CD4-positive, alpha-beta T cell (primary cell): ENCODE measurements at regions of chr17 and their contacts with region 1.

Region 1: DNA sequence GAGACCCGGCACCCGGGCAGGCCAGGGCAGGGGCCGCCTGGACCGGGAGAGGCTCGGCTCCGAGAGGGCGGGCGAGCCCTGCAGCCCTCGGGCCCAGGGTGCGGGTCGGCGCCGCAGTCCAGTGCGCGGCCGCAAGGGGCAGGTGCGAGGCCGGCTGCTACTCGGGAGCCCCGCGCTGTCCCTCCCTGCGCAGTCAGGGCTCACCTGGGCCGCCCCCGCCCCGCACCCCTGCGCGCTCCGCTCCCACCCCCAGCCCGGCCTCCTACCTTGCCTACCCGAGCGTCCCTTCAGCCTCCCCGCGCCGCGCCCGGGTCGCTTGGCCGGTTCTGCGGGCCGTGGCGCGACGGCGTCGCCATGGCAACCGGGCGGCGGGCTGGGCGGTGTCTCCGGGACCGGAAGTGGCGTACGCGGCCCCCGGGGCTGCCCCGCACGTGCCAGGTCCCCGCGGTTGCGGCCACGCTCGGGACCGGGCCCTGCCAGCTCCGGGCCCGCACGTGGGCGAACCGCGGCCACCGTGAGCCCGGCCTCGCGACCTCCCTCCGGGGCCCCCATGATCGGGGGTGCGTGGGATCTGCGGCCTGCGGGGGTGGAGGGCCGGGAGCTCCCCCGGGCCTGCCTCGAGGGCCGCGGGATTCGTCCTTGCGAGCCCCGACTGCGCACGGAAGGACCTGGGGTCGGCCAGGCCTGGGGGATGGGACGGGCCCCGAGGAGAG is at the start of gene CYB561:
- DNase-seq: peak; percentile 33 to 90 (median 64)
- ATAC-seq: peak; percentile 71
- H3K4me3 ChIP-seq: peak within 1 kb of the TSS; percentile 71
- H3K4me3 Mint-ChIP-seq: peak within 1 kb of the TSS; percentile 90
- H3K27ac ChIP-seq: peak within 1 kb of the TSS; percentile 82 to 96
- H3K27ac Mint-ChIP-seq: peak within 1 kb of the TSS; percentile 85
- H3K4me1 ChIP-seq: peaks cover 52% of the 10 kb centered on the region
- H3K4me1 Mint-ChIP-seq: peaks cover 35% of the 10 kb centered on the region
- H3K27me3 ChIP-seq: no peaks in the 10 kb centered on the region
- H3K27me3 Mint-ChIP-seq: peaks cover 6% of the 10 kb centered on the region
- CTCF ChIP-seq: peak; percentile 29
- total RNA-seq, gene CYB561: 17.4 to 18.1 TPM

Region 2: GRCh38 chr17:63434876-63435684 is 11.1 kb before region 1 on chr17:
- CTCF ChIA-PET with region 1: interaction called, 8 read pairs
- POLR2A ChIA-PET with region 1: interaction called, 15 read pairs
- intact Hi-C with region 1: no loop called
- DNase-seq: peak in 11 of 14 experiments; percentile 29 to 80 (median 43)
- ATAC-seq: peak; percentile 92
- H3K4me3 ChIP-seq: no peak overlapping the region
- H3K4me3 Mint-ChIP-seq: peak overlapping the region; percentile 60
- H3K27ac ChIP-seq: no peak overlapping the region
- H3K27ac Mint-ChIP-seq: peak overlapping the region; percentile 76
- H3K4me1 ChIP-seq: peaks cover 65% of the 10 kb centered on the region
- H3K4me1 Mint-ChIP-seq: peaks cover 19% of the 10 kb centered on the region
- H3K27me3 ChIP-seq: no peaks in the 10 kb centered on the region
- H3K27me3 Mint-ChIP-seq: no peaks in the 10 kb centered on the region
- CTCF ChIP-seq: no peak

Region 3: GRCh38 chr17:63478791-63479494 is 32.8 kb after region 1 on chr17:
- CTCF ChIA-PET with region 1: interaction called, 7 read pairs
- POLR2A ChIA-PET with region 1: interaction called, 12 read pairs
- intact Hi-C with region 1: loop called in 1 of 2 experiments (anchors 5 kb)
- DNase-seq: peak; percentile 66 to 88 (median 70)
- ATAC-seq: peak; percentile 81
- H3K4me3 ChIP-seq: no peak overlapping the region
- H3K4me3 Mint-ChIP-seq: peak overlapping the region; percentile 64
- H3K27ac ChIP-seq: no peak overlapping the region
- H3K27ac Mint-ChIP-seq: no peak overlapping the region
- H3K4me1 ChIP-seq: peaks cover 26% of the 10 kb centered on the region
- H3K4me1 Mint-ChIP-seq: peaks cover 14% of the 10 kb centered on the region
- H3K27me3 ChIP-seq: peaks cover 10 to 11% of the 10 kb centered on the region in 2 experiments
- H3K27me3 Mint-ChIP-seq: peaks cover 35% of the 10 kb centered on the region
- CTCF ChIP-seq: peak; percentile 61

Region 4: GRCh38 chr17:63549946-63550807 is 104.0 kb after region 1 on chr17 and contains the start of gene DCAF7:
- CTCF ChIA-PET with region 1: interaction called, 3 read pairs
- POLR2A ChIA-PET with region 1: interaction called, 8 read pairs
- intact Hi-C with region 1: loop called in 1 of 2 experiments (anchors 5 kb)
- DNase-seq: peak; percentile 97 to 100 (median 99)
- ATAC-seq: peak; percentile 95
- H3K4me3 ChIP-seq: peak within 1 kb of the TSS; percentile 89
- H3K4me3 Mint-ChIP-seq: peak within 1 kb of the TSS; percentile 98
- H3K27ac ChIP-seq: peak within 1 kb of the TSS; percentile 90 to 91
- H3K27ac Mint-ChIP-seq: peak within 1 kb of the TSS; percentile 88
- H3K4me1 ChIP-seq: peaks cover 38% of the 10 kb centered on the region
- H3K4me1 Mint-ChIP-seq: peaks cover 52% of the 10 kb centered on the region
- H3K27me3 ChIP-seq: no peaks in the 10 kb centered on the region
- H3K27me3 Mint-ChIP-seq: no peaks in the 10 kb centered on the region
- CTCF ChIP-seq: no peak
- total RNA-seq, gene DCAF7: 11.3 to 11.9 TPM